ENCODE measurements at regions of chr3 and their contacts with region 1.

Region 1: GRCh38 chr3:151483961-151484520 is 23.2 kb upstream of the IGSF10 start:
- DNase-seq: no peak
- H3K4me3 ChIP-seq: no peak overlapping the region
- H3K27ac ChIP-seq: no peak overlapping the region
- H3K4me1 ChIP-seq: no peaks in the 10 kb centered on the region
- H3K27me3 ChIP-seq: no peaks in the 10 kb centered on the region
- CTCF ChIP-seq: no peak

Region 2: GRCh38 chr3:151568184-151568583 is 84.1 kb after region 1 on chr3:
- intact Hi-C with region 1: loop called (anchors 10 kb)
- DNase-seq: no peak
- H3K4me3 ChIP-seq: no peak overlapping the region
- H3K27ac ChIP-seq: no peak overlapping the region
- H3K4me1 ChIP-seq: no peaks in the 10 kb centered on the region
- H3K27me3 ChIP-seq: no peaks in the 10 kb centered on the region
- CTCF ChIP-seq: no peak

Region 3: GRCh38 chr3:153369561-153370374 is 1885.7 kb after region 1 on chr3:
- intact Hi-C with region 1: no loop called
- DNase-seq: no peak
- H3K4me3 ChIP-seq: no peak overlapping the region
- H3K27ac ChIP-seq: no peak overlapping the region
- H3K4me1 ChIP-seq: no peaks in the 10 kb centered on the region
- H3K27me3 ChIP-seq: no peaks in the 10 kb centered on the region
- CTCF ChIP-seq: no peak

Measured in tibial artery (tissue), 4 donors.